ENCODE measurements at regions of chr3 and their contacts with region 1.

Region 1: GRCh38 chr3:52220380-52221026 is 4.9 kb downstream of the TLR9 start:
- DNase-seq: peak; percentile 84 to 88
- H3K4me3 ChIP-seq: no peak overlapping the region
- H3K4me3 Mint-ChIP-seq: no peak overlapping the region
- H3K27ac Mint-ChIP-seq: no peak overlapping the region
- H3K4me1 ChIP-seq: peaks cover 4% of the 10 kb centered on the region; the same call in 1 of the 2 replicates
- H3K4me1 Mint-ChIP-seq: peaks cover 6% of the 10 kb centered on the region
- H3K27me3 ChIP-seq: no peaks in the 10 kb centered on the region
- H3K27me3 Mint-ChIP-seq: no peaks in the 10 kb centered on the region
- CTCF ChIP-seq: peak; percentile 88 to 91

Region 2: GRCh38 chr3:52231502-52232293 is 11.2 kb after region 1 on chr3:
- CTCF ChIA-PET with region 1: interaction called, 22 read pairs
- POLR2A ChIA-PET with region 1: no interaction called
- intact Hi-C with region 1: no loop called
- DNase-seq: peak in 1 of 2 experiments; percentile 81
- H3K4me3 ChIP-seq: no peak overlapping the region
- H3K4me3 Mint-ChIP-seq: no peak overlapping the region
- H3K27ac Mint-ChIP-seq: no peak overlapping the region
- H3K4me1 ChIP-seq: no peaks in the 10 kb centered on the region
- H3K4me1 Mint-ChIP-seq: no peaks in the 10 kb centered on the region
- H3K27me3 ChIP-seq: no peaks in the 10 kb centered on the region
- H3K27me3 Mint-ChIP-seq: no peaks in the 10 kb centered on the region
- CTCF ChIP-seq: peak; percentile 79 to 91

Region 3: DNA sequence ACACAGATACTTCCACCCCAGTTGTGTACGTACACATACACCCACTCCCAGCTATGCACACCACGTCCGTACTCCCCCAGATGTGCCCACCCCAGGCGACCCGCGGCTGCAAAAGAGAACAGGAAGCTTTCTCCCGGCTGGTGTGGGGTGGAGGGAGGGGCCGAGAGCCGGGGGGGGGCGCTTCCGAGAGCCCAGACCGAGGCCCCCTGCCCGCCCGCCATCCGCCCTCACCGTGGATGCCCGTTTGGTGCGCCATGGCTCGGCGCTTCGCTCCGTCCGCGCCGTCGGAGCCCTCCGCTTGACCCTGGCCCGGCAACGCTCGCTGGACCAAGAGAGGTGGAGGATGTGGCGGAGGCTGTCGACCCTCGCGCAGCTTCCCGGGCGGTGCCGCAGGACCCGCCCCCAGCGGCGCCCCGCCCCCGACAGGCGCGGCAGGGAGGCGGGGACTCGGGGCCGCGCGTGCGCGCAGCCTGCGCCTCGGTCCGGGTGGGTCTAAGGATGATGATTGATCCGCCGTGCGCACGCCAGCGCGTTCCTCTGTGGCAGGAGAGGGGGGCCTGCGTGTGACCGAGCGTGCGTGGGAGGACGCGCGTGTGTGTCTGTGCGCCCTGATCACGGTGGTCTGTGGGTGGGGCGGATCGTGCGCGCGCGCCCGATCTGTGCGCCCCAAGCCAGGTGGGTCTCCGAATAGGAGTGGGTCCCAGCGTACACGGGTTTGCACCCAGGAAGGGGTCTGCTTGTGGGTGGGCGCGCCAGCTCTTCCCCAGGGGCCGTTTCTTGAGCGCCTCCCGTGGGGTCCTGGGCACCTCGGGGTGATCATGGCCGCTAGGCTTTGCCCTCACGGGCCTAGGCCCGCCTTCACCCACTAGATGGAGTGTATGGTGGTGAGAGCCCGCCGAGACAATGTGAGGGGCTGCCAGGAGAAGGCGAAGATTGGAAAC is 18.5 kb after region 1 on chr3 and contains the start of gene TWF2:
- CTCF ChIA-PET with region 1: interaction called, 20 read pairs
- POLR2A ChIA-PET with region 1: no interaction called
- intact Hi-C with region 1: no loop called
- DNase-seq: peak; percentile 68 to 88
- H3K4me3 ChIP-seq: peak within 1 kb of the TSS; percentile 100
- H3K4me3 Mint-ChIP-seq: peak within 1 kb of the TSS; percentile 83
- H3K27ac Mint-ChIP-seq: peak within 1 kb of the TSS; percentile 91
- H3K4me1 ChIP-seq: peaks cover 18% of the 10 kb centered on the region; the same call in 1 of the 2 replicates
- H3K4me1 Mint-ChIP-seq: peaks cover 8% of the 10 kb centered on the region
- H3K27me3 ChIP-seq: no peaks in the 10 kb centered on the region
- H3K27me3 Mint-ChIP-seq: no peaks in the 10 kb centered on the region
- CTCF ChIP-seq: peak in 1 of 2 experiments; percentile 53
- total RNA-seq, gene TWF2: 29.9 and 30.5 TPM in 2 replicates

Region 4: GRCh38 chr3:52385157-52385556 is 164.7 kb after region 1 on chr3:
- CTCF ChIA-PET with region 1: interaction called, 32 read pairs
- POLR2A ChIA-PET with region 1: no interaction called
- intact Hi-C with region 1: loop called (anchors 1 kb)
- DNase-seq: peak; percentile 82
- H3K4me3 ChIP-seq: no peak overlapping the region
- H3K4me3 Mint-ChIP-seq: no peak overlapping the region
- H3K27ac Mint-ChIP-seq: no peak overlapping the region
- H3K4me1 ChIP-seq: no peaks in the 10 kb centered on the region
- H3K4me1 Mint-ChIP-seq: no peaks in the 10 kb centered on the region
- H3K27me3 ChIP-seq: no peaks in the 10 kb centered on the region
- H3K27me3 Mint-ChIP-seq: no peaks in the 10 kb centered on the region
- CTCF ChIP-seq: peak; percentile 73 to 94

Measured in Caco-2 (cell line).